ENCODE measurements at regions of chr10 and their contacts with region 1.

Region 1: DNA sequence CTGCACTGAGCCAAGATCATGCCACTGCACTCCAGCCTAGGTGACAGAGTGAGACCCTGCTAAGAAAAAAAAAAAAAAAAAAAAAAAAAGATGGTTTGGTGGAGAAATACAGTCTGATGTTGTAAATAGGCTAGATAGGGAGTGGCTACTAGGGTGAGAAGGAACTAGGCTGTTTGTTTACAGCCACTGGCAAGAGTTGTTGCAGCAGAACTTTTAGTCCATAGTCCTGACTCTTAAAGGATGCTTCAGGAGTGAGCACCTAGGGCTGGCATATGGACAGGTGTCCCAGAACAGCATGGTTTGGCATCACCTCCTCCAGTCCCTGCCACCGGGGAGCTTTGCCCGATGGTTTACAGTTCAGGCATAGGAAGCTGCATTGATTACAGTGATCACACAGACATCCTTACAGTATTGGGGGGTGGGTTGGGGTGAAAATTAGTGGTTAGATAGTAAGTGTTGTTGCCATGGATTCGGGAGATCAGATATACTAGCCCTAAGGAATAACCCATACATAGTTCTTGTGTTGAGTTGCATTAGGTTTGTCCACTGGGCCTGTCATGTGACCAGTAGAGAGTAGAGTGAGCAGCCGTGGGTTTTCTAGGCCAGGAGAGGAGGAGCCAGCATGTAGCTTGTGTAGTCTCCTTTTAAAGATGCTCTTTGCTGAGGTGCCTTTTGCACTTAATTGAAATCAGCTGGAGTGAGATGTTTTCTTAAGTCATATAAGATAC is 35.9 kb downstream of the ZRANB1 start:
- DNase-seq: no peak
- ATAC-seq: no peak
- H3K4me3 ChIP-seq: no peak overlapping the region
- H3K27ac ChIP-seq: no peak overlapping the region
- H3K4me1 ChIP-seq: no peaks in the 10 kb centered on the region
- H3K27me3 ChIP-seq: no peaks in the 10 kb centered on the region
- CTCF ChIP-seq: no peak

Region 2: DNA sequence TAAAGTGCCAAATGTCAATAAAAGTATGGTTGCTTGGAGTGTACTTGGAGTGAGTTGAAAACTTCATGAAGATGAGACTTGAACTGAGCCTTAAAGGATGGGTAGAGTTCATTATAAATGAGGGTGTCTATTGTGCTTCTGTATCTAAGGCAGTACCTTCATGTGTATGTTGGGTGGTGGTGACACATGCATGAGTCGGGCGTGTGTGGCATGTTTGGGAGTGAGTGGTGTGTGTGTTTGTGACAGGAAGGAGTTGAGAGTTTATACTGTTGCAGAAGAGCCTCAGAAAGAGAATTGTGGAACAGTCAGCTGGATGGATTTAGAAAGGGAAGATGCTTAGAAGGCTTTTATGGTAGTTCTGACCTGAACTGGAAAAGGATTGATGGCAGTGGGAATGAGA is 41.9 kb before region 1 on chr10:
- CTCF ChIA-PET with region 1: interaction called, 12 read pairs
- POLR2A ChIA-PET with region 1: no interaction called
- intact Hi-C with region 1: no loop called
- DNase-seq: peak; percentile 40
- ATAC-seq: peak; percentile 29; the same call in 1 of the 2 replicates
- H3K4me3 ChIP-seq: no peak overlapping the region
- H3K27ac ChIP-seq: no peak overlapping the region
- H3K4me1 ChIP-seq: no peaks in the 10 kb centered on the region
- H3K27me3 ChIP-seq: no peaks in the 10 kb centered on the region
- CTCF ChIP-seq: no peak

Region 3: GRCh38 chr10:125015312-125015944 is 37.6 kb after region 1 on chr10:
- CTCF ChIA-PET with region 1: no interaction called
- POLR2A ChIA-PET with region 1: no interaction called
- intact Hi-C with region 1: no loop called
- DNase-seq: no peak
- ATAC-seq: no peak
- H3K4me3 ChIP-seq: no peak overlapping the region
- H3K27ac ChIP-seq: no peak overlapping the region
- H3K4me1 ChIP-seq: peaks cover 8% of the 10 kb centered on the region; the same call in 1 of the 2 replicates
- H3K27me3 ChIP-seq: no peaks in the 10 kb centered on the region
- CTCF ChIP-seq: no peak

Region 4: GRCh38 chr10:125093199-125093973 is 115.6 kb after region 1 on chr10:
- CTCF ChIA-PET with region 1: no interaction called
- POLR2A ChIA-PET with region 1: no interaction called
- intact Hi-C with region 1: no loop called
- DNase-seq: no peak
- ATAC-seq: no peak
- H3K4me3 ChIP-seq: no peak overlapping the region
- H3K27ac ChIP-seq: no peak overlapping the region
- H3K4me1 ChIP-seq: no peaks in the 10 kb centered on the region
- H3K27me3 ChIP-seq: no peaks in the 10 kb centered on the region
- CTCF ChIP-seq: no peak

Region 5: DNA sequence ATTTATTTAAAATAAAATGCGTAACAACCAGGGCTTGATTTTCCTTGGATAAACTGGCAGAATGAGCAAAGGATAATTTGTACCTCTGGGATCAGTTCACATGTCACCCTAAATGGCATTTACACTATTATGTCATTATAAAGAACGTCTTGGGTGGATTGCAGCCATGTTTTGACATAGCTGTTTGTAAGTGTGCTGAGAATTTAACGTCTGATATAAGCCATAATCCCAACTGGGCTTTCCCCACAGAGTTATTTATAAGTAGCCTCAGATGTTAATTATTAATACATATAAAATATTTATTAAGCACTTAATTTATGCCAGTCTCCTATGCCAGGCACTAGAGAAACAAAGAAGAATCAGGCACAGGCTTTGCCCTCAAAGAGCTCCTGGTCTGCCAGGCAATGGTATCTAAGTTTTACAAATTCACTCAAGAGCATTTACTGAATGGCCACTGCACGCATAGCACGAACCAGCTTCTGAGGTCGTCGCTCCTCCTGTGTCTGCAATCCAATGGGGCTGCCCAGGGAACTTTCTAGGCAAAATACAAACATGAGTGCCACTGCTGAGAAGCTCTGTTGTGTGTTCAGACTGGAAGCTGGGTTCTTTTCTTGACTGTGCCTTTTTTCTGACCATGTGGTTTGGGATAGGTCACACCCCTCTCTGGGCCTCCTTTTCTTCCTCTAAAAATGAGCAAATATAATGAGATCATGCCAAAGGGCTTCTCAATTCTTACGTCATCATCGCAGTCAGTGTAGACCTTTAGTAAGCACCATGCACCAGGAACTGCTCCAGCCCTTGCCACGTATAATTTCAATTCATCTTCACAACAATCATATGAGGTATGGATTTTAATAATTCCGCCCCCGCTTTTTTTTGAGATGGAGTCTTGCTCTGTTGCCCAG is 193.8 kb after region 1 on chr10:
- CTCF ChIA-PET with region 1: no interaction called
- POLR2A ChIA-PET with region 1: interaction called, 53 read pairs
- intact Hi-C with region 1: no loop called
- DNase-seq: no peak
- ATAC-seq: no peak
- H3K4me3 ChIP-seq: no peak overlapping the region
- H3K27ac ChIP-seq: no peak overlapping the region
- H3K4me1 ChIP-seq: no peaks in the 10 kb centered on the region
- H3K27me3 ChIP-seq: no peaks in the 10 kb centered on the region
- CTCF ChIP-seq: no peak